ENCODE measurements at regions of chr7 and their contacts with region 1.

Region 1: GRCh38 chr7:48718731-48719387 is 205.5 kb upstream of the CDC14C start:
- DNase-seq: peak; percentile 65
- ATAC-seq: peak; percentile 86
- H3K4me3 ChIP-seq: no peak overlapping the region
- H3K27ac ChIP-seq: peak overlapping the region; percentile 66
- H3K4me1 ChIP-seq: peaks cover 6% of the 10 kb centered on the region; the same call in 1 of the 2 replicates
- H3K27me3 ChIP-seq: no peaks in the 10 kb centered on the region
- CTCF ChIP-seq: no peak

Region 2: GRCh38 chr7:48548667-48549066 is 170.2 kb before region 1 on chr7:
- CTCF ChIA-PET with region 1: no interaction called
- POLR2A ChIA-PET with region 1: interaction called, 10 read pairs
- intact Hi-C with region 1: no loop called
- DNase-seq: peak; percentile 12
- ATAC-seq: peak; percentile 38
- H3K4me3 ChIP-seq: no peak overlapping the region
- H3K27ac ChIP-seq: no peak overlapping the region
- H3K4me1 ChIP-seq: no peaks in the 10 kb centered on the region
- H3K27me3 ChIP-seq: no peaks in the 10 kb centered on the region
- CTCF ChIP-seq: no peak